MCF 10A (cell line): ENCODE measurements at regions of chr4 and their contacts with region 1.

Region 1: DNA sequence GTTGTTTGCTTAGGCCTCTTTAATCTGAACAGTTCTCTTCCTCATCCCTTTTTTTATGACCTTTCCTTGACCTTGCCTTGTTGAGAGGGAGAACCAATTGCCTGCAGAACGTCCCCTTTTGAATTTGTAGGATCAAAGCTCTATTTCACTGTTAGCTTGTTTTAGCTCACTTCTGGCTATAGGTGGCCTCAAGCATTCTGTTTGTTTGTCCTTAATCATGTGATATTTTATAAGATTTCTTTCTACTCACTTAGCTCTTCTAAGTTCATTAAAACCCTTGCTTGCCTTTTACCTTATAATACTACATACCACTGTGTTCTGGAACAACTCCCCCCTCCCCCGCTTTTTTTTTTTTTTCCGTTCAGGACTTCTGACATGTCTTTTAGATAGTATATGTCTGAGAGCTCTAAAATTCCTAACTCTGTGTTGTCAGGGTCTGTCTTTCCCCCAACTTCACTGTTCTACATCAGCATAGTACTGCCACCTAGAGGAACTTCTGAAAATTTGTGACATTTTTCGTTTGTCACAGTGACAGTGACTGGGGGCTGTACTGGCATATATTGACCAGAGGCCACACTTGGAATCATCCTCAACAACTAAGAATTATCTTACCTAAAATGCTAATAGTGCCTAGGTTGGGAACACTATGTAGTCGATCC is 128.5 kb downstream of the LARP7 start:
- DNase-seq: peak; percentile 11
- H3K4me3 Mint-ChIP-seq: no peak overlapping the region
- H3K27ac Mint-ChIP-seq: no peak overlapping the region
- H3K4me1 Mint-ChIP-seq: no peaks in the 10 kb centered on the region
- H3K27me3 Mint-ChIP-seq: no peaks in the 10 kb centered on the region
- CTCF ChIP-seq: peak; percentile 25

Region 2: GRCh38 chr4:112636688-112637551 is 128.5 kb before region 1 on chr4 and contains the starts of genes LARP7 and ZGRF1:
- CTCF ChIA-PET with region 1: interaction called, 19 read pairs
- POLR2A ChIA-PET with region 1: interaction called, 3 read pairs
- intact Hi-C with region 1: loop called (anchors 1 kb)
- DNase-seq: peak; percentile 99
- H3K4me3 Mint-ChIP-seq: no peak within 1 kb of the TSS
- H3K27ac Mint-ChIP-seq: no peak within 1 kb of the TSS
- H3K4me1 Mint-ChIP-seq: peaks cover 13% of the 10 kb centered on the region
- H3K27me3 Mint-ChIP-seq: no peaks in the 10 kb centered on the region
- CTCF ChIP-seq: peak; percentile 88
- total RNA-seq, gene LARP7: 33.8 and 36.3 TPM in 2 replicates
- total RNA-seq, gene ZGRF1: 6.1 and 6.9 TPM in 2 replicates

Region 3: DNA sequence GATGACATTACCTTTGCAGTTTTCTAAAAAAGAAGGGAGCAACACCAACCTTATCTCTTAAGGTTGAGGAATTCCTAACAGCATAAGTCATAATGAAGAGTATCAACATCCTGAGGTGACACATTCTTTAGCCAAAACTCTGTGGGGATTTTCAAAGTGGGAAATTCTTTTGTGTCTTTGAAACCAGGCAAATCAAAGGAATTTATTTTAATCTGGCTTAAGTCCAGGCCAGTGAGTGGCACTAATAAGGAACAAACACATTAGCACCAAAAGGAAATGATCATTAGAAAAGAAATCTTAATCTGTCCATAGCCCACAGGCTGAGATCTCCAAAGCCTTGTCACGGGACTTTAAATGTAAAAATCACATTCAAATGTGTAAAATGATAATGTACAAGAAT is 18.4 kb before region 1 on chr4:
- CTCF ChIA-PET with region 1: interaction called, 21 read pairs
- POLR2A ChIA-PET with region 1: interaction called, 3 read pairs
- intact Hi-C with region 1: no loop called
- DNase-seq: no peak
- H3K4me3 Mint-ChIP-seq: no peak overlapping the region
- H3K27ac Mint-ChIP-seq: no peak overlapping the region
- H3K4me1 Mint-ChIP-seq: no peaks in the 10 kb centered on the region
- H3K27me3 Mint-ChIP-seq: no peaks in the 10 kb centered on the region
- CTCF ChIP-seq: no peak

Region 4: DNA sequence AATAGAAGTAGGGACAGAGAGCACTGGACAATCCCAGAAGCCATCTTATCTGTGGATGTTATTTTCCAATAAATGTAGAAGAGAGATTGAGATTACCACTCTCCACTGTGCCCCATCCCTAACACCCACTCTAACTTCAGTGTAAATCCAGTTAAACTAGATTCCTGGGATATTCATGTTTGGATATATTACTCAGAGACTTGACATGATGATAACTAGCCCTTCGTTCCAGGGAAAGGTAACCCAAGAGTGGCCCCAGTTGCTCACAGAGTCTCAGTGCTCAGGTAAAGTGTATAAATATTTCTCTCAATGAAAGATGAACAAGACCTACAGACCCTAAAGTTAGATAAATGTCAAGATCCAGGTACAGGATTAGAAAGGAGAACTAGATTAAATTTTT is 29.7 kb after region 1 on chr4:
- CTCF ChIA-PET with region 1: interaction called, 11 read pairs
- POLR2A ChIA-PET with region 1: no interaction called
- intact Hi-C with region 1: no loop called
- DNase-seq: no peak
- H3K4me3 Mint-ChIP-seq: no peak overlapping the region
- H3K27ac Mint-ChIP-seq: no peak overlapping the region
- H3K4me1 Mint-ChIP-seq: no peaks in the 10 kb centered on the region
- H3K27me3 Mint-ChIP-seq: no peaks in the 10 kb centered on the region
- CTCF ChIP-seq: no peak

Region 5: DNA sequence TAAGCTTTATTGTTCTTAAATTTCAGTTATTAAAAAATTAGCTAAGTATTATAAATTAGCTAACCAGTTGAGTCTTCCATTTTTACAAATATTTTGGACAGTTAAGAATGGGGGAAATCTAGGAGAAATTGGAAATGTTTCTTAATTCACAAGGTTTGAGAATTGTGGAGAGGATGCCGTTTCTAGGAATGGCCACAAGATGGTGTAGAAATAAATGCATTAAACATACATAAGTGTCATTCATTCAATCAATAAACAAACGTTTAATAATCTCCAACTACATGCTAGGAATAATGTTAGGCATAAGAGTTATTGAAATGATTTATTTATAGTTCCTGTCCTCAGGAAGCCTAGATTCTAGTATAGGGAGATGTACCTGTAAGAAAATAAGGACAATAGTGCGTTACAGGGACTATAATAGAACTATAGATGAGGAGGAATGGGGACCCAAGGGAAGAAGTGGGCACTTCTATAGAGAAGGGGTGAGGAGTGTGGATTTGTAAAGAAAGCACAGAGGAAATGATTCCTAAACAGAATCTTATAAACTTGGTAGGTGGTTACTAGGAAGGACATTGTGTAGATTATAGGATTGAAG is 88.3 kb after region 1 on chr4:
- CTCF ChIA-PET with region 1: interaction called, 6 read pairs
- POLR2A ChIA-PET with region 1: no interaction called
- intact Hi-C with region 1: loop called (anchors 5 kb)
- DNase-seq: peak; percentile 37
- H3K4me3 Mint-ChIP-seq: no peak overlapping the region
- H3K27ac Mint-ChIP-seq: no peak overlapping the region
- H3K4me1 Mint-ChIP-seq: peaks cover 8% of the 10 kb centered on the region
- H3K27me3 Mint-ChIP-seq: no peaks in the 10 kb centered on the region
- CTCF ChIP-seq: peak; percentile 52

Region 6: GRCh38 chr4:113094802-113095201 is 329.4 kb after region 1 on chr4:
- CTCF ChIA-PET with region 1: interaction called, 3 read pairs
- POLR2A ChIA-PET with region 1: no interaction called
- intact Hi-C with region 1: loop called (anchors 1 kb)
- DNase-seq: peak; percentile 22
- H3K4me3 Mint-ChIP-seq: no peak overlapping the region
- H3K27ac Mint-ChIP-seq: no peak overlapping the region
- H3K4me1 Mint-ChIP-seq: peaks cover 7% of the 10 kb centered on the region
- H3K27me3 Mint-ChIP-seq: no peaks in the 10 kb centered on the region
- CTCF ChIP-seq: peak; percentile 83